ENCODE measurements at regions of chr2 and their contacts with region 1.

Region 1: DNA sequence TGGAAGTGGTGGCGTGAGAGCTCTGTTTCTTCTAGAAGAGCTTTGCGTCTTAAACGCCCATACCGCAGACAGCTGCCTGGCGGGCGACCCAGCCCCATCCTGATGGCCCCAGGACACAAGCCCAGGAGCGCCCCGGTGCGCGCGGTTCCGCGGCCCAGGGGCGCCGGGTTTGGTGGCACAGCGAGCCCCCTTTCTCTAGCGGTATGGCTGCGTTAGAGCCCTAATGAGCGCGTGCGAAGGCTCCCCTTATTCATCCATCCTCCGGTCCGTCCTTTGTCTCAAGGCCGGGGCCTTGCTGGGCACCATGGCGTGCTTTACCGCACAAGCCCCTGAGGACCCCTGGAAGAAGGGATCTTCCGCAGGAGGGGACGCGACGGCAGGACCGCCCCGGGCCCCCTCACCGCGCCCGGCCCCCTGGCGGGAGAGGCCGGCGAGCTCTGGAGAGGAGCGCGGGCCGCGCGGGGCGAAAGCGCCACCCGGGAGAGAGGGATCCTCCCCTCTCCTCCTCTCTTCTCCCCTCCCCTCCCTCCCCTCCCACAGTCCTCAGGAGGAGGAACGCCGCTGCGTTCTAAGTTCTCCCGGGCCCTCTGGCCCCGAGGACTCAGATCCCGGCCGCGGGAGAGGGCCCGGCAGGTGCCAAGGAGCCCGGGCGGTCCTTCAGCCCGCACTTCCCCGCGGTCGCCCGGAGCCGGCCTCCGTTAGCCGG is 626 bp upstream of the SLC1A4 start:
- DNase-seq: peak; percentile 62
- ATAC-seq: peak; percentile 43
- H3K4me3 Mint-ChIP-seq: peak overlapping the region; percentile 85
- H3K27ac Mint-ChIP-seq: peak overlapping the region; percentile 87
- H3K4me1 Mint-ChIP-seq: peaks cover 40% of the 10 kb centered on the region
- H3K27me3 Mint-ChIP-seq: no peaks in the 10 kb centered on the region
- CTCF ChIP-seq: no peak

Region 2: DNA sequence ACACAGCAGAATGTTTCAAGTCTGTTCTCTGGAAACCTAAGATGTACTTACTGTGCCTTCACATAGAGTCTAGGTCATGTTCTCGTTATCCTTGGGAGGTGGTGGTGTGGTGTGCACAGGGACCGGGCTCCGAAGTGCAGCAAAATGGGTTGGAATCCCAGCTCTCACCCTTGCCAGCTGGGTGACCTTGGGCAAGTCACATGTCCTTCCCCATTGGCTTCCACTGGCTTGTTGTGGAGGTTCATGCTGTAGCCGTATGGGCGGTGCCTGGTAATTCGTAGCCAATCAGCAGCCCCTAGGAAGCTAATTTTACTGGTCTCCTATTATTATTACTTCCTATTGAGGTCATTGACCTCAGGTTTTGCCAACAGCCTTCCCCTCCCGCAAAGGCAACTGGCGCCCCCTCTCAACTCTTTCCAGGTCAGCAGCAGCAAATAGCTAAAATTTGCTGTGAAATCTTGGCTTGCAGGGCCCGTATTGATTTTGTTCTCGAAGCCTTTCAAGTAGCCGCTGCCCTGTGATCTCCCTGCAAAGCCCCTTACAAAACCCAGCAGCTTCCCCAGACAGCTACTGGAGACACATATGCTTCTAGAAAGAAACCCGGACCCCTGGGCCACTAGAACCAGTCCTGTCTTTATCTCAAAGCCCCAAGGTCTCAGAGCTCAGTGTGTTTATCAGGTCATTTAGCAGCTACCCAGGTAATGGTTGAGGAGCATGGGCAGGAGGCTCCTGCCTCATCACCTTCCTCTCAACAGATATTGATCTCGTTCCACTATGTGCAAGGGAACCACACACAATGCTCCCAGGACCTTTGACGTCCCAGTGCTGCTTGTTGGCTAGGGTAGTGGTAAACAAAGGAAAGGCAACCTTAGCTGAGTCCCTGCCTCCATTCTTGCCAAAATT is 65.8 kb before region 1 on chr2:
- CTCF ChIA-PET with region 1: interaction called, 35 read pairs
- POLR2A ChIA-PET with region 1: interaction called, 102 read pairs
- intact Hi-C with region 1: loop called (anchors 1 kb)
- DNase-seq: no peak
- ATAC-seq: no peak
- H3K4me3 Mint-ChIP-seq: no peak overlapping the region
- H3K27ac Mint-ChIP-seq: peak overlapping the region; percentile 72
- H3K4me1 Mint-ChIP-seq: peaks cover 76% of the 10 kb centered on the region
- H3K27me3 Mint-ChIP-seq: no peaks in the 10 kb centered on the region
- CTCF ChIP-seq: no peak

Region 3: GRCh38 chr2:64937687-64938491 is 50.7 kb before region 1 on chr2:
- CTCF ChIA-PET with region 1: interaction called, 5 read pairs
- POLR2A ChIA-PET with region 1: interaction called, 47 read pairs
- intact Hi-C with region 1: no loop called
- DNase-seq: peak; percentile 46
- ATAC-seq: peak; percentile 69
- H3K4me3 Mint-ChIP-seq: peak overlapping the region; percentile 62
- H3K27ac Mint-ChIP-seq: peak overlapping the region; percentile 91
- H3K4me1 Mint-ChIP-seq: peaks cover 92% of the 10 kb centered on the region
- H3K27me3 Mint-ChIP-seq: no peaks in the 10 kb centered on the region
- CTCF ChIP-seq: no peak

Region 4: GRCh38 chr2:64970495-64970894 is 18.1 kb before region 1 on chr2:
- CTCF ChIA-PET with region 1: no interaction called
- POLR2A ChIA-PET with region 1: no interaction called
- intact Hi-C with region 1: no loop called
- DNase-seq: no peak
- ATAC-seq: no peak
- H3K4me3 Mint-ChIP-seq: no peak overlapping the region
- H3K27ac Mint-ChIP-seq: no peak overlapping the region
- H3K4me1 Mint-ChIP-seq: peaks cover 4% of the 10 kb centered on the region
- H3K27me3 Mint-ChIP-seq: no peaks in the 10 kb centered on the region
- CTCF ChIP-seq: no peak

Region 5: GRCh38 chr2:65017335-65017734 is 28.8 kb after region 1 on chr2:
- CTCF ChIA-PET with region 1: no interaction called
- POLR2A ChIA-PET with region 1: interaction called, 12 read pairs
- intact Hi-C with region 1: loop called (anchors 2 kb)
- DNase-seq: no peak
- ATAC-seq: peak; percentile 78
- H3K4me3 Mint-ChIP-seq: peak overlapping the region; percentile 55
- H3K27ac Mint-ChIP-seq: peak overlapping the region; percentile 71
- H3K4me1 Mint-ChIP-seq: peaks cover 44% of the 10 kb centered on the region
- H3K27me3 Mint-ChIP-seq: no peaks in the 10 kb centered on the region
- CTCF ChIP-seq: no peak

Region 6: DNA sequence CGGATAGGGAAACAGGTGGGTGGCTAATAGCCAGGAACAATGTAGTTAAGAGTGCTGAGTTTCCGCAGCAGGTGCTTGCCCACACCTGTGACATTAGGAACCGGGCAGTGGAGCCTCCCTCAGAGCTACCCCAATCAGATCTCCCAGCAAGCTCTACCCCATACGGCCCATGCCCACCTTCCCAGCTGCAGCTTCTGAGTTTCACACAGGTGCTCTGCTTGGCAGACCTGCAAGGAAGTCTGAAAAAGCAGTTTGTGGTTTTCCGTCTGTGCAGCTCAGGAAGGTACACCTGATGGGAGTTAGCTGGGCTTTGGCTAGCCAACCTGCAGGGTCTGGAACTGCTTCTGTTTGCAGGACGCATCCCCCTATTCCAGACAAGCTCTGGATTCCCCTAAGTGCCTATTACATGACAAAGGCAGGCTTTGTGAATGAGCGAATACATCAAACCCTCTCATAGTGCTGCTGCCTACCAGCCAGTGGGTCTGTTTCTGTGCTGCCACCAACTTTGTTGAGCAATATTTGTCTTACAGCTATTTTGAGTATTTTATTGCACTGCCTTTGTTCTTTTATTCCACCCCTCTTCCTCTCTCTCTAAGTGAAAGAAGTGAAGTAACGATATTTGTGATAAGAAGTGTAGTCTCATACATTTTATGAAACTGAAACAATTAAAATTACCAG is 42.9 kb after region 1 on chr2:
- CTCF ChIA-PET with region 1: interaction called, 5 read pairs
- POLR2A ChIA-PET with region 1: interaction called, 80 read pairs
- intact Hi-C with region 1: loop called (anchors 1 kb)
- DNase-seq: no peak
- ATAC-seq: peak; percentile 8
- H3K4me3 Mint-ChIP-seq: peak overlapping the region; percentile 80
- H3K27ac Mint-ChIP-seq: peak overlapping the region; percentile 86
- H3K4me1 Mint-ChIP-seq: peaks cover 66% of the 10 kb centered on the region
- H3K27me3 Mint-ChIP-seq: no peaks in the 10 kb centered on the region
- CTCF ChIP-seq: no peak

Region 7: DNA sequence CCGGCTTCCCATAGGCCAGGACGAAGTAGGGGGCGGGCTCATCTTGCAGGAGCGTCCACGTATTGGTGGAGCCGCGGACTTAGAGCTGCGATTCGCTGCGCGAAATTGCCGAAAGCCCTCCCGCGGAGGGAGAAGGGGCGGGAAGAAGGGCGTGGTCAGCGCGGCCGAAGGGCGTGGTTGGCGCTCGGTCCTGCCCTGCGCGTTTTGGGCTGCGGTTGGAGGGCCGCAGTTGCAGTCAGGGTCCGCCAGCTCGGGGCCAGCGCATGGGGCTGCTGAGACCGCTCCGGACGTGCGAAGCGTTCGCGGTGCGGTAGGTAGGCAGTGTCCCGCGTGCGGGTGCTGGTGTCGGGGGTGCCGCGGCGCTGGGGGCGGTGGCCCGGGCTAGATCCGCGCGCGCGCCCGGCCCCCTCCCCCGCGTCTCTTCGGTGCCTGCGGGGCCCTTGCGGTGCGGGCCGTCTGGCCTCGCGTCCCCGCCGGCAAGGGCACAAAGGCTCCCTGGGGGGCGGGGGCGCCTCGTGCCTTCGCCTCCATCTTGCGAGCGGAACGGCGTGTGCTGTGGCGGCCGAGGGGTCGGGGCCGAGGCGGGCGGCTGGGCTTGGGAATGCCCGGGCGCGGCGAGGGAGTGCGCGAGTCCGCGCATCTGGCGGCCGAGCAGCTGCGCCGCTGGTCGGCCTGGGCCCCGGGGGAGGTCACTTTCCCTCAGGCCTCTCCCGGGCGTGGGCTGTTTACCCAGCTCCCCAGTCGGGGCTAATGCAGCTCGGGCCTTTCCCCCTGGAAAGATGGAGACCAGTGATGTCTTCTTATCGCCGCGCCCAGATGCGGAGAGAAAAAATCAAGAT is 67.9 kb after region 1 on chr2 and contains the start of gene CEP68:
- CTCF ChIA-PET with region 1: no interaction called
- POLR2A ChIA-PET with region 1: interaction called, 10 read pairs
- intact Hi-C with region 1: loop called (anchors 1 kb)
- DNase-seq: peak; percentile 95
- ATAC-seq: peak; percentile 91
- H3K4me3 Mint-ChIP-seq: peak within 1 kb of the TSS; percentile 97
- H3K27ac Mint-ChIP-seq: peak within 1 kb of the TSS; percentile 95
- H3K4me1 Mint-ChIP-seq: peaks cover 75% of the 10 kb centered on the region
- H3K27me3 Mint-ChIP-seq: no peaks in the 10 kb centered on the region
- CTCF ChIP-seq: no peak
- total RNA-seq, gene CEP68: 16.6 and 17.9 TPM in 2 replicates

Region 8: DNA sequence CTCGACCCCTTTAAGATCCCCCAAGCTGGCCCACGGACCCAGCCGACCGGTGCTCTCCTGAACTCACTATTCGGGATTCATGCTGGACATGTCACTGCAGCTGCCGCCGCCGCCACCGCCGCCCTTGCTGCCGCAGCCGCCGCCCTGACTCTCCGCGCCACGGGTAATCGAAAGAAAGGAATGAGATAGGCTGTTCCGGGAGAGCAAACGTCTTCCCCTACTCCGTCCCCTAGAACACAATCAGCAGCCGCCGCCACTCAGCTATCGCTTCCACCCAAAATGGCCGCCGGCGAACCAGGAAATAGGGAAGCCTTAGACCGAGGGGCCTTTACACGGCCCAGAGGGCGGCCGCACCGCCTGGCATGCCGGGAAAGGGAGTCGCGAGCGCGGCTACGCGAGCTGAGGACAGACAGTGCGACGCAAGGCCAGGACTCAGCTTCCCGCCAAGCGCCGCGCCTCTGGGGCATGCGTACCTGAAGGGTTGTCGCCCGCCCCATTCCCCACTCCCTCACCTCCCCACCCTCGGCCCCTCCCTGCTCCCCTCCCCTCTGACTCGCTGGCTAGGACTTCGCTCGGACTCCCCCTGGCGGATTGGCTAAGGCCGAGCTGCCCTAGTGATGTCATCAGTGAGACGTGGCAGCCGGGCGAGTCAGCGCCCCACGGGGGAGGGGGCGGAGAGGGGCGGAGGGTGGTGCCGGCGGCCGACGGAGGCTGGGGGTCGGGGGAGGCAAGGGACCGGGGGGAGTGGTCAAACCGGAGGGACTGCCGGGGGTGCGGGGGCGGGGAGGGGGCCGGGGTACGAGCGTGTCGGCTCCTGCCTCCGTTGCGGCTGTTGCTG is 141.5 kb after region 1 on chr2 and contains the start of gene RAB1A:
- CTCF ChIA-PET with region 1: no interaction called
- POLR2A ChIA-PET with region 1: interaction called, 4 read pairs
- intact Hi-C with region 1: loop called (anchors 1 kb)
- DNase-seq: peak; percentile 91
- ATAC-seq: peak; percentile 93
- H3K4me3 Mint-ChIP-seq: peak within 1 kb of the TSS; percentile 100
- H3K27ac Mint-ChIP-seq: peak within 1 kb of the TSS; percentile 100
- H3K4me1 Mint-ChIP-seq: peaks cover 49% of the 10 kb centered on the region
- H3K27me3 Mint-ChIP-seq: no peaks in the 10 kb centered on the region
- CTCF ChIP-seq: no peak
- total RNA-seq, gene RAB1A: 45.0 and 46.4 TPM in 2 replicates

Region 9: DNA sequence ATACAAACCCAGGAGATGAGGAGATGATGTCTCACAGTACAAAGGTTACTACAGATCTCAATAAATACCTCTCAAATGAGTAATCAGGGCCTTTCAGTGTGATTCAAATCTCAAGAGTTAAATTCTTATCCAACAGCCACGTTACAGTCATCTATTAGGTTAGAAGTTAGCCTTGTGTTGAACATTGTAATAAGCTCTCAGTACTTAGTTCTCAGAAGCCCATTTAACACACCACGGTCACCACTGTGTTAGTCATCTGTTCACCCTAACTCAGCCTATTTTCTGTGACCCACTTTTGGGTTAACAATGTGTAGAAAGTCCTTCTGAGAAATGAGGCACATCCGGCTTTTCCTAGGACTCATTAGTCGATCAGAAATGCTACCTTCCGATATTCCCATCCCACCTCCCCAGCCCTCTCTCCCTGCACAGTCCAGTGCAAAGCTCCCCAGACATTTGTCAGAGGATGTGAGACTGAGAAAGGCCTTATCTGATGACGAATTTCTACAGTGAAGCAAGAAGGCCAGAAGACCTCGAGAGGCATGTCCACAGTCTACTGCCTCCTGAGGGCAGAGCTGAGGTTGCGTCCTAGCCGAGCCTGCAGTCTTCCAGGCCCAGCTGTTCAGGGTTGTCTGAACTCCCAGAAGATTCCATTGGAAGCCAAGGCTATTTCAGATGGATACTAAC is 331.6 kb after region 1 on chr2:
- CTCF ChIA-PET with region 1: no interaction called
- POLR2A ChIA-PET with region 1: no interaction called
- intact Hi-C with region 1: no loop called
- DNase-seq: no peak
- ATAC-seq: no peak
- H3K4me3 Mint-ChIP-seq: no peak overlapping the region
- H3K27ac Mint-ChIP-seq: no peak overlapping the region
- H3K4me1 Mint-ChIP-seq: peaks cover 15% of the 10 kb centered on the region
- H3K27me3 Mint-ChIP-seq: peaks cover 28% of the 10 kb centered on the region
- CTCF ChIP-seq: no peak

Measured in activated B cell treated with CpG ODN at 0.5 μM for 24 hours (primary cell).